Gastrocnemius medialis (tissue), 4 donors: ENCODE measurements at regions of chr16 and their contacts with region 1.

Region 1: GRCh38 chr16:63960321-63960720 is 1161.5 kb downstream of the CDH11 start:
- DNase-seq: no peak
- ATAC-seq: no peak
- H3K4me3 ChIP-seq: no peak overlapping the region
- H3K27ac ChIP-seq: no peak overlapping the region
- H3K4me1 ChIP-seq: no peaks in the 10 kb centered on the region
- H3K27me3 ChIP-seq: no peaks in the 10 kb centered on the region
- CTCF ChIP-seq: no peak
- POLR2A ChIP-seq: no peak

Region 2: DNA sequence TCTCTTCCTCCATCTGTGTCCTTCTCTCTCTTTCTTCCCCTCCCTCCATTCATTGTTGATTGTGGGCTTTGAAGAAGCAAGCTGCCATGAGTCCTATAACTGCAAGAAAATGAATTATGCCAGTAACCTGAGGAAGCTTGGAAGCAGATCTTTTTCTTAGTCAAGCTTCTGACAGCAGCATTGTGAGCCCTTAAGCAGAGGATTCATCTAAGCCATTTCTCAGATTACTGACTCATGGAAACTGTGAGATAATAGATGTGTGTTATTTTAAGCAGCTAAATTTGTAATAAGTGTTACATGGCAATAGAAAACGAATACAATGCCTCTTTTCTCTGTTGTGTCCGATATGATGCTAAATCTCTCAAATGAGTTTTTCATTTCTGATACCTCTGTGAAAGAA is 51.8 kb after region 1 on chr16:
- in situ Hi-C with region 1: no loop called
- intact Hi-C with region 1: no loop called
- DNase-seq: no peak
- ATAC-seq: no peak
- H3K4me3 ChIP-seq: no peak overlapping the region
- H3K27ac ChIP-seq: no peak overlapping the region
- H3K4me1 ChIP-seq: no peaks in the 10 kb centered on the region
- H3K27me3 ChIP-seq: no peaks in the 10 kb centered on the region
- CTCF ChIP-seq: no peak
- POLR2A ChIP-seq: no peak

Region 3: DNA sequence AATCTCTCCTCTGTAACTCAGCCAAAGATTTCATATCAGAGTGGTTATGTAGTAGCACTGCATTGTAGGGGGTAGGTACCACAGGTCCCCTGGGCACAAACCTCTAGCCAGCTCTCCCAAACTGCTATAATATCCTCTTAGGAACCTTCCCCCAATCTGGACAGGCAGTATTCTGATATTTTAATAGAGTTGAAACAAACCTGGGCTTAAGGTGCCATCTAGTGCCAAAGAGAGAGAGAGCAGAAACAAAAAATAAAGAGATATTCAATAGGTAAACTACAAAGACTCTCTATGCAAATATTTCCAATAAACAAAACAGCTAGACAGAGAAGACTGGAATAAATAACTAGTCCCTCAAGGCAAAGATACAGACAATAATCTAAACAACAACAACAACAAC is 91.5 kb after region 1 on chr16:
- in situ Hi-C with region 1: loop called in 1 of 4 experiments (anchors 25 kb)
- intact Hi-C with region 1: no loop called
- DNase-seq: no peak
- ATAC-seq: no peak
- H3K4me3 ChIP-seq: no peak overlapping the region
- H3K27ac ChIP-seq: no peak overlapping the region
- H3K4me1 ChIP-seq: no peaks in the 10 kb centered on the region
- H3K27me3 ChIP-seq: no peaks in the 10 kb centered on the region
- CTCF ChIP-seq: no peak
- POLR2A ChIP-seq: no peak

Region 4: GRCh38 chr16:64687786-64688185 is 727.5 kb after region 1 on chr16:
- in situ Hi-C with region 1: no loop called
- intact Hi-C with region 1: no loop called
- DNase-seq: no peak
- ATAC-seq: no peak
- H3K4me3 ChIP-seq: no peak overlapping the region
- H3K27ac ChIP-seq: no peak overlapping the region
- H3K4me1 ChIP-seq: no peaks in the 10 kb centered on the region
- H3K27me3 ChIP-seq: no peaks in the 10 kb centered on the region
- CTCF ChIP-seq: no peak
- POLR2A ChIP-seq: no peak